Activated CD4-positive, alpha-beta memory T cell treated with anti-CD3 and anti-CD28 coated beads for 36 hours (primary cell): ENCODE measurements at regions of chr19 and their contacts with region 1.

Region 1: GRCh38 chr19:45558399-45558878 is 26.2 kb downstream of the OPA3 start:
- DNase-seq: peak; percentile 81
- H3K4me3 Mint-ChIP-seq: no peak overlapping the region
- H3K27ac Mint-ChIP-seq: no peak overlapping the region
- H3K4me1 Mint-ChIP-seq: peaks cover 17% of the 10 kb centered on the region
- H3K27me3 Mint-ChIP-seq: no peaks in the 10 kb centered on the region

Region 2: GRCh38 chr19:45455707-45456499 is 102.5 kb before region 1 on chr19:
- CTCF ChIA-PET with region 1: no interaction called
- POLR2A ChIA-PET with region 1: no interaction called
- intact Hi-C with region 1: no loop called
- DNase-seq: peak; percentile 84
- H3K4me3 Mint-ChIP-seq: no peak overlapping the region
- H3K27ac Mint-ChIP-seq: peak overlapping the region; percentile 56
- H3K4me1 Mint-ChIP-seq: peaks cover 29% of the 10 kb centered on the region
- H3K27me3 Mint-ChIP-seq: no peaks in the 10 kb centered on the region

Region 3: GRCh38 chr19:45469132-45469944 is 89.1 kb before region 1 on chr19:
- CTCF ChIA-PET with region 1: no interaction called
- POLR2A ChIA-PET with region 1: no interaction called
- intact Hi-C with region 1: no loop called
- DNase-seq: peak; percentile 96
- H3K4me3 Mint-ChIP-seq: peak overlapping the region; percentile 87
- H3K27ac Mint-ChIP-seq: peak overlapping the region; percentile 84
- H3K4me1 Mint-ChIP-seq: peaks cover 33% of the 10 kb centered on the region
- H3K27me3 Mint-ChIP-seq: peaks cover 1% of the 10 kb centered on the region

Region 4: DNA sequence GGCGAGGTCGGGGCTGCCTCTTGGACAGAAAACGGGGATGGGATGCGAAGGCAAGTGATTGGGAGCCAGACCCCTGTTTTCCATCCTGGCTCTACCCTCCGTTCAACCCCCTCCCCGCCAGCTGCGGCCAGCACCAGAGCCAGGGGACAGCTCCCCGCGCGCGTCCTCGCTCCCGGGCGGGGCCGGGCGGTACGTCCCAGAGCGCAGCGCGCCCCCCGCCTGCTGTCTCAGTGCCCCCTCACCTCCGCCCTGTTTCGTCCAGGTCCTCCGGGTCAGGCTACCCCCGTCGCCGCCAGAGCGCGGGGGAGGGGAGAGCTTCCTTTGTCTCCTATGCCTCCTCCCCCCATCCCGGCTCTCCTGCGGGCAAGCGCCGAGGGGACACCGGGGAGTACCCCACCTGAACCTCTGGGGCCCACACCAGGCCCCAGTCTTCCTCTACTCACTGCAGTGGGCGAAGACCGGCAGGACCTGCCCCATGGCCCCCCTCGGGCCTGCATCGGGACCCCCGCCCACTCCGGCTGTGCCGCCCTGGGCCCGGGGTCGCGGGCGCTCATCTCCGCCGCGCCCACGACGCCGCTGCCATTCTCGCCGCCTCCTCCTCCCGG is 62.0 kb before region 1 on chr19:
- CTCF ChIA-PET with region 1: interaction called, 11 read pairs
- POLR2A ChIA-PET with region 1: no interaction called
- intact Hi-C with region 1: no loop called
- DNase-seq: peak; percentile 60
- H3K4me3 Mint-ChIP-seq: peak overlapping the region; percentile 50
- H3K27ac Mint-ChIP-seq: no peak overlapping the region
- H3K4me1 Mint-ChIP-seq: peaks cover 33% of the 10 kb centered on the region
- H3K27me3 Mint-ChIP-seq: peaks cover 25% of the 10 kb centered on the region

Region 5: GRCh38 chr19:45506246-45506990 is 52.0 kb before region 1 on chr19:
- CTCF ChIA-PET with region 1: interaction called, 6 read pairs
- POLR2A ChIA-PET with region 1: no interaction called
- intact Hi-C with region 1: loop called (anchors 1 kb)
- DNase-seq: peak; percentile 99
- H3K4me3 Mint-ChIP-seq: peak overlapping the region; percentile 86
- H3K27ac Mint-ChIP-seq: peak overlapping the region; percentile 94
- H3K4me1 Mint-ChIP-seq: peaks cover 35% of the 10 kb centered on the region
- H3K27me3 Mint-ChIP-seq: no peaks in the 10 kb centered on the region

Region 6: GRCh38 chr19:45523642-45524256 is 34.7 kb before region 1 on chr19:
- CTCF ChIA-PET with region 1: interaction called, 7 read pairs
- POLR2A ChIA-PET with region 1: no interaction called
- intact Hi-C with region 1: loop called (anchors 1 kb)
- DNase-seq: peak; percentile 84
- H3K4me3 Mint-ChIP-seq: no peak overlapping the region
- H3K27ac Mint-ChIP-seq: peak overlapping the region; percentile 70
- H3K4me1 Mint-ChIP-seq: peaks cover 18% of the 10 kb centered on the region
- H3K27me3 Mint-ChIP-seq: peaks cover under 1% of the 10 kb centered on the region

Region 7: DNA sequence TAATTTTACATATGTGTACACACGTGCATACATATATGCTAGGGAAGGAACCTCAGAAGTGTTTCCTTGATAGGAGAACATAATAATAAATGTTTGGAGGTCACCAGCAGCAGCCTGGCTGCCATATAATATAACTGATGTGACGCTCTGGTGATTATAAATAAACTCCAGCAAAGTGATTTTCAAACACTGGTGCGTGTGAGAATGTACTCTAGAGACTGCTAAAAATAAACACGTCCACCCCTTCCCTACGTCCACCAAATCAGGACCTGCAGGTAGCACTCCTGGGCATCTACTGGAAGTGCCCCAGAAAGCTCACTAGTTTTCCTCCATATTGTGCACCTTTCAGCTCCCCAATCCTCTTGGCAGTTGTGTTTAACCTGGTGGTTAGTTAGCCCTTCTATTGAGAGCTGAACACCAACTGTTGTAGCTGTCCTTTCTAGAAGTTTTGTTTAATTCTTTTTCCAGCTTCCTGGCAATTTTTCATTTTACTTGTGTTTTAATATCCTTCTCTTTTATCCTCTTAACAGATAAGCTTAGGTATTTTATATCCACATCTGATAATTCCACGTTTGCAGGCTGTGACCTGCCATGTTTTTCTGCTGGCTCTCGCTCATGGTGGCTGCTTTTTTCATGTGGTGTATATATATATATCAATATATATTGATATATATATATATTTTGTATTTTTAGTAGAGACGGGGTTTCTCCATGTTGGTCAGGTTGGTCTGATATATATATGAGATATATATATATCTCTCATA is 13.2 kb after region 1 on chr19:
- CTCF ChIA-PET with region 1: interaction called, 12 read pairs
- POLR2A ChIA-PET with region 1: no interaction called
- intact Hi-C with region 1: no loop called
- DNase-seq: no peak
- H3K4me3 Mint-ChIP-seq: no peak overlapping the region
- H3K27ac Mint-ChIP-seq: no peak overlapping the region
- H3K4me1 Mint-ChIP-seq: peaks cover 5% of the 10 kb centered on the region
- H3K27me3 Mint-ChIP-seq: no peaks in the 10 kb centered on the region

Region 8: GRCh38 chr19:45584332-45585157 is 26.1 kb after region 1 on chr19 and contains the start of gene OPA3:
- CTCF ChIA-PET with region 1: interaction called, 14 read pairs
- POLR2A ChIA-PET with region 1: no interaction called
- intact Hi-C with region 1: no loop called
- DNase-seq: peak; percentile 100
- H3K4me3 Mint-ChIP-seq: peak within 1 kb of the TSS; percentile 96
- H3K27ac Mint-ChIP-seq: peak within 1 kb of the TSS; percentile 97
- H3K4me1 Mint-ChIP-seq: peaks cover 11% of the 10 kb centered on the region
- H3K27me3 Mint-ChIP-seq: peaks cover 1% of the 10 kb centered on the region
- total RNA-seq, gene OPA3: 10.8 to 11.0 TPM

Region 9: GRCh38 chr19:45599286-45599685 is 40.8 kb after region 1 on chr19:
- CTCF ChIA-PET with region 1: no interaction called
- POLR2A ChIA-PET with region 1: no interaction called
- intact Hi-C with region 1: no loop called
- DNase-seq: no peak
- H3K4me3 Mint-ChIP-seq: no peak overlapping the region
- H3K27ac Mint-ChIP-seq: no peak overlapping the region
- H3K4me1 Mint-ChIP-seq: peaks cover 28% of the 10 kb centered on the region
- H3K27me3 Mint-ChIP-seq: peaks cover 71% of the 10 kb centered on the region